ENCODE measurements at regions of chr17 and their contacts with region 1.

Region 1: DNA sequence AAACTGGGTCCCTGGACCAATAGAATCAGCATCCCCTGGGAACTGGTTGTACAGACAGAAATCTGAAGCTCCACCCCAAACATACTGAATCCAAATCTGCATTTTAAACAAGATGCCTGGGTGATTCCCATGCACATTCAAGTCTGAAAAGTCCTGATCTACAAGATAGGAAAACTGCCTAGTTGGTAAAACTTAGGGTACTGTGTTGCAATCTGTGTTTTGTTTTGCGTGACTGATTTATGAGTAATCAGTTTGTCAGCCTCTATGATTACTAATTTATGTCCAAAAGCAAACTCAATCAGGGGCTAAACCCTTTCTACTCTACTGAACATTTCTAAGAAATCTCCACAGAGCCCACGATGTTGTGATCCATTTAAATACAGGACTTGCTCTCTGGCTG is 103.8 kb downstream of the YPEL2 start:
- DNase-seq: no peak
- ATAC-seq: no peak
- H3K4me3 ChIP-seq: no peak overlapping the region
- H3K27ac ChIP-seq: no peak overlapping the region
- H3K4me1 ChIP-seq: peaks cover 14% of the 10 kb centered on the region
- H3K27me3 ChIP-seq: no peaks in the 10 kb centered on the region
- CTCF ChIP-seq: no peak

Region 2: DNA sequence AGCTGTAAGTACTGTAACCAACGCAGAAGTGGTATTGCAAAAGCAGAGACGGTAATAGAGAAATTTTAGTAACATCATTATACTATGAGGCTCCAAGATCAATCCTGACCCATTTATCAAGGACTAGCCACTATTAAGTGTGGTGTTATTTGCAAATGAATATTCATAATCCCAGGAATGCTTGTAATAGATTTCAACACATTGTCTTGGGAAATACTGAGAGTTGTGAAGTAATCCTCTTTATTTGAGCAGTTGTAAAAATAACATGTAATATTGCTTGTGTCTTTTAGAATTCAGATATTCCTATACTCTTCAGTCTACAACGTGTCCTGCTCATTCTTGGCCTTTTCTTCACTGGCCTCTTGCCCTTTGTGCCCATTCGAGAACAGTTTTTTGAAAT is 168.5 kb before region 1 on chr17:
- intact Hi-C with region 1: no loop called
- DNase-seq: no peak
- ATAC-seq: no peak
- H3K4me3 ChIP-seq: no peak overlapping the region
- H3K27ac ChIP-seq: no peak overlapping the region
- H3K4me1 ChIP-seq: no peaks in the 10 kb centered on the region
- H3K27me3 ChIP-seq: no peaks in the 10 kb centered on the region
- CTCF ChIP-seq: no peak

Region 3: DNA sequence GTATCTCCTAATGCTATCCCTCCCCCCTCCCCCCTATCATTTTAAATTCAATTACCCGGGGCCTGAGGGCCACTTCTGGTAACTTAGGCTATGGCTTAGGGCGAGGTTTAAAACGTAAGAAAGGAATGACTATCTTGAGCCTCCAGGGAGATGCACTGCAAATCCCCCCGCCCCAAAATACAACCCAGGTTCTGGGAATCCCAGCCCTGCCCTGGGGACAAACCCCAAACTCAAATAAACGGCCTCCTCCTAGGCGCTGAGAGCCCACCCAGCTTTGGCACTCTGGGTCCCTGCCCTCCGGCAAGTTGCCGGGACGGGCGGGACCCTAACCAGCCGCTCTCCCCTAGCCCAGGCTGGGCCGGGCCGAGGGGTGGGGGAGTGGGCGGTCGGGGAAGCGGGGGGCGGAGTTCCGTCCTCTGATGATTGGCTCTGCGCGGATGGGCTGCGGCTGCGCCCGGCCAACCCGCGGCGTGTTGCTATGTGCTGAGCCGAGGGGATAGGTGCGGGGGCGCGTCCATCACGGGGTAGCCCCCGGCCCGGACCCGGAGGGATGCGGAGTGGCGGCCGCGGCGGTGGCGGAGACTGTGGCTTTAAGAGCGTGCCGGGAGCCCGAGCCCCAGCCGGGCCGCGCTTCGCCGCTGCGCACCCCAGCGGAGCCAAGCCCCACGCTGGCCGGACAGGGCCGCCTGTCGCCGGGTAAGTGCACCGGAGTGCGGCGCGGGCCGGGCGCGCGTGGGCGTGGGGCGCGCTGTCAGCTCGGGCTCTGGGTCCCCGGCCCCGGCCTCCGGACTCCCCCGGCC is 103.9 kb before region 1 on chr17 and contains the start of gene YPEL2:
- intact Hi-C with region 1: loop called (anchors 10 kb)
- DNase-seq: peak; percentile 98
- ATAC-seq: peak; percentile 94
- H3K4me3 ChIP-seq: peak within 1 kb of the TSS; percentile 96
- H3K27ac ChIP-seq: peak within 1 kb of the TSS; percentile 92
- H3K4me1 ChIP-seq: peaks cover 56% of the 10 kb centered on the region
- H3K27me3 ChIP-seq: no peaks in the 10 kb centered on the region
- CTCF ChIP-seq: no peak
- total RNA-seq, gene YPEL2: 19.6 TPM